Transverse colon (tissue), 4 donors: ENCODE measurements at regions of chr9 and their contacts with region 1.

Region 1: GRCh38 chr9:8168916-8169438 is 369.4 kb upstream of the DMAC1 start:
- DNase-seq: no peak
- H3K4me3 ChIP-seq: no peak overlapping the region
- H3K27ac ChIP-seq: no peak overlapping the region
- H3K4me1 ChIP-seq: peaks cover 0 to 6% (median 0%) of the 10 kb centered on the region in 4 donors
- H3K27me3 ChIP-seq: no peaks in the 10 kb centered on the region
- CTCF ChIP-seq: no peak
- EP300 ChIP-seq: no peak
- POLR2A ChIP-seq: no peak

Region 2: DNA sequence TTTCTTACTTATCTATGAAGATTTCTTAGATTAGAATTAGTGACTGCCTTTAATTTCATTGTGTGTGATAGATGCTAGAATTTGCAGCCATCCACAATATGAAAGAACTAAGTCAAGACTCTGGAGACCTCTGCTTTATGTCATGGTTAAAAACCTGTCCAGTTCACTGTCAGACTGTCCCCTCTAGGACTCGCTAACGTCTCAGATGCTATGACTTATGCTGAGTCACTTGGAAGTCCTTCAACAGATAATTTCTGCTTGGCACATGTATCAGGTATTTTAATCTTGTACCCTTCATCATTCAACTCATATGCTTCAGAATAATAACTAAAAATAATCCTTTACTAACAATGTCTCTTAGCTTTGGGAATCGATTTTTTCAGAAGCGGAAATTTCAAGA is 138.9 kb before region 1 on chr9:
- in situ Hi-C with region 1: no loop called
- intact Hi-C with region 1: no loop called
- DNase-seq: no peak
- H3K4me3 ChIP-seq: no peak overlapping the region
- H3K27ac ChIP-seq: no peak overlapping the region
- H3K4me1 ChIP-seq: no peaks in the 10 kb centered on the region
- H3K27me3 ChIP-seq: no peaks in the 10 kb centered on the region
- CTCF ChIP-seq: no peak
- EP300 ChIP-seq: no peak
- POLR2A ChIP-seq: no peak

Region 3: GRCh38 chr9:8115570-8115969 is 53.4 kb before region 1 on chr9:
- in situ Hi-C with region 1: no loop called
- intact Hi-C with region 1: no loop called
- DNase-seq: no peak
- H3K4me3 ChIP-seq: no peak overlapping the region
- H3K27ac ChIP-seq: no peak overlapping the region
- H3K4me1 ChIP-seq: no peaks in the 10 kb centered on the region
- H3K27me3 ChIP-seq: no peaks in the 10 kb centered on the region
- CTCF ChIP-seq: no peak
- EP300 ChIP-seq: no peak
- POLR2A ChIP-seq: no peak

Region 4: DNA sequence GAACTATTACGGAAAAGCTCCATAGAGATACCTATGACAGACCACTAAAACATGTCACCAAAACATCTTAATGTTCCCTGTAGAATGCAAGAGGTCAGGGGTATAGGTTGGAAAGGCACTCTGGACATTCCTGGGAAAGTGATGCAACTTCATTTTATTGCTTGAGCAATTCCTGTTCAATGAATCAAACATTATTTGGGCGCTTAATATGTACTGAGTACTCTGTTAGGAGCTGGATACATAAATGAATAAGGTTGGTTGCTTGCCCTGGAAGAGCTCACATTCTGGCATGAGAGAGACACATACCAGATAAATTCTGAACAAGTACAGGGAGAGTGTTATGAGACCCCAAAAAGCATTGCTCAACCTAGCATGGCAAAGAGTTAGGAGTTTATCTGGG is 39.5 kb after region 1 on chr9:
- in situ Hi-C with region 1: no loop called
- intact Hi-C with region 1: loop called (anchors 2 kb)
- DNase-seq: no peak
- H3K4me3 ChIP-seq: no peak overlapping the region
- H3K27ac ChIP-seq: no peak overlapping the region
- H3K4me1 ChIP-seq: no peaks in the 10 kb centered on the region
- H3K27me3 ChIP-seq: no peaks in the 10 kb centered on the region
- CTCF ChIP-seq: no peak
- EP300 ChIP-seq: no peak
- POLR2A ChIP-seq: no peak

Region 5: GRCh38 chr9:8224381-8224801 is 55.4 kb after region 1 on chr9:
- in situ Hi-C with region 1: loop called in 1 of 4 experiments (anchors 10 kb)
- intact Hi-C with region 1: no loop called
- DNase-seq: no peak
- H3K4me3 ChIP-seq: no peak overlapping the region
- H3K27ac ChIP-seq: no peak overlapping the region
- H3K4me1 ChIP-seq: no peaks in the 10 kb centered on the region
- H3K27me3 ChIP-seq: no peaks in the 10 kb centered on the region
- CTCF ChIP-seq: no peak
- EP300 ChIP-seq: no peak
- POLR2A ChIP-seq: no peak

Region 6: DNA sequence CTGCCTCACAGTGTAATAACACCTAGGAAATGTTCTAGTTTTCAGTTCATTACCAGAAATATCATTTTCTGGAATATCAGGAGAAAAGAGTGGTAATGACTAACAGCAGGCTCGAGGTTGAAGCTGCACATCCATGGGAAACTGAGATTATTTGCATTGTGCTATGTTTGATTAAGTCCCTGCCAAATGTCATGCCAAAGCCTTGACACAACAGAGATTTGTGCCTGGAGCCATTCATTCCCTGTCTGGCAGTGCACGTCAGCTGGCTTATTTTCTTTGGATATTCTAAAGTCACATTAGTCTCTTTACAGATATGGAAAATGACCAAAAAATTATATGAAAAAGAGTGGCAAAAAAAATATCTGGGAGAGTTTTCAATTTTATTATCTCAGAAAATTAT is 1595.8 kb after region 1 on chr9:
- in situ Hi-C with region 1: no loop called
- intact Hi-C with region 1: no loop called
- DNase-seq: no peak
- H3K4me3 ChIP-seq: no peak overlapping the region
- H3K27ac ChIP-seq: no peak overlapping the region
- H3K4me1 ChIP-seq: no peaks in the 10 kb centered on the region
- H3K27me3 ChIP-seq: no peaks in the 10 kb centered on the region
- CTCF ChIP-seq: no peak
- EP300 ChIP-seq: no peak
- POLR2A ChIP-seq: no peak